ENCODE measurements at regions of chr1 and their contacts with region 1.

Region 1: DNA sequence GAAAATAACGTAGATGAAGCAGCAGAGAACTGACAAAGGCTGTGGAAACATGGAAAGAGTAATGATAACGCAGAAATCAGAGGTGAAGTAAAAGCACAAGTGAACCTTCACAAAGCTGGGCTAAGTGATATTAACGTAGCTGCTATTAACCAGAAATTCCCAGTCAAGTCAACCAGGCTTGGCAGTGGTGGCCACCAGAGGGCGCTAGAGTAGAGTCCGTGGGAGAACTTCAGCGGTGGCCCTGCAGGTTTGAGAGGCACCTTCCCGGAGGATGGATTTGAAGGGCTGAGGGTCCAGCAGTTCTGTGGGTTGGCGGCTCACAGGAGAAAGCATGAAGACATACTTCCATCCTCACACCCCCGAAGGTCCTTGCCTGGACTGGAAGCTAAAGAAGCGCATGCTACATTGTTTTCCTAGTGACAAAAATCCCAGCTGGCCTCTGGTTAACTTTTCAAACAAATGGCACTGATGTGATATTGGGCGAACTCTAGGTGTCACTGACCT is 81.7 kb upstream of the ZNF648 start:
- DNase-seq: peak; percentile 94 to 98 (median 96)
- H3K4me3 ChIP-seq: no peak overlapping the region
- H3K27ac ChIP-seq: peak overlapping the region; percentile 86 to 91
- H3K4me1 ChIP-seq: peaks cover 20% of the 10 kb centered on the region
- H3K27me3 ChIP-seq: no peaks in the 10 kb centered on the region
- CTCF ChIP-seq: peak; percentile 96 to 98 (median 96)
- EP300 ChIP-seq: no peak
- POLR2A ChIP-seq: peak; percentile 40

Region 2: GRCh38 chr1:181021811-181022434 is 1121.3 kb before region 1 on chr1:
- intact Hi-C with region 1: no loop called
- DNase-seq: peak; percentile 64 to 73 (median 72)
- H3K4me3 ChIP-seq: peak overlapping the region; percentile 87
- H3K27ac ChIP-seq: peak overlapping the region; percentile 43 to 76
- H3K4me1 ChIP-seq: no peaks in the 10 kb centered on the region
- H3K27me3 ChIP-seq: no peaks in the 10 kb centered on the region
- CTCF ChIP-seq: no peak
- EP300 ChIP-seq: no peak
- POLR2A ChIP-seq: no peak

Region 3: GRCh38 chr1:181989261-181989920 is 153.8 kb before region 1 on chr1:
- intact Hi-C with region 1: no loop called
- DNase-seq: no peak
- H3K4me3 ChIP-seq: no peak overlapping the region
- H3K27ac ChIP-seq: no peak overlapping the region
- H3K4me1 ChIP-seq: no peaks in the 10 kb centered on the region
- H3K27me3 ChIP-seq: no peaks in the 10 kb centered on the region
- CTCF ChIP-seq: no peak
- EP300 ChIP-seq: no peak
- POLR2A ChIP-seq: no peak

Region 4: GRCh38 chr1:182198049-182198501 is 54.9 kb after region 1 on chr1:
- intact Hi-C with region 1: loop called in 3 of 4 experiments (anchors 2 to 10 kb)
- DNase-seq: no peak
- H3K4me3 ChIP-seq: no peak overlapping the region
- H3K27ac ChIP-seq: peak overlapping the region; percentile 24 to 78
- H3K4me1 ChIP-seq: peaks cover 13% of the 10 kb centered on the region
- H3K27me3 ChIP-seq: no peaks in the 10 kb centered on the region
- CTCF ChIP-seq: peak in 1 of 3 donors; percentile 27
- EP300 ChIP-seq: no peak
- POLR2A ChIP-seq: no peak

Region 5: DNA sequence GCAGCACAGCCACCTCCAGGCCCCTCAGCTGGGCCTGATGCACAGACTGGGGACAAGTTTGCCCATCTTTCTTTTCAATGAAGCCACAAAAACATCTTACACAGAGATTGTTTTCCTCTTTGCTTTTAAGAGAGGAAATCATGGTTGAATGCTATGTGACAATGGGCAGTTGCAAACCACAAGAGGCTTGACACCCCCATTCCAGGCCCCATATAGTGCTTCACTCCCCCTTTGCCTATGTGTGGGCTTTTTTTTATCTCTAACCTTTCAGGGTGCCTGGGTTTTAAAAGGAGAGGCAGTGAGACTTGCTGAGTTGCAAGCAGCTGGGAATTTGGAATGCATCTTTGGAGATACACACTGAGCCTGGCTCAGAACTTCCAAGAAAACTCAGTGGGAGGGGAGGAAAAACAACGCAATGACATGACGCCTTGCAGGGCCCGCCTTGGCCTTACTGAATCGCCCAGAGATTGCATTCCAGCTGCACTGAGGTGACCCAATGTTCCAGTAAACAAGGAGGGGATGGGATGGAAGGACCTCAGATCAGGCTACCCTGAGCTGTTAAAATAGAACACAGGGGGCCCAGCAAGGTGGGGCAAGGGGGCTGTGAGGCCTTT is 63.5 kb after region 1 on chr1:
- intact Hi-C with region 1: loop called in 3 of 4 experiments (anchors 5 to 10 kb)
- DNase-seq: peak; percentile 79 to 92 (median 87)
- H3K4me3 ChIP-seq: no peak overlapping the region
- H3K27ac ChIP-seq: peak overlapping the region; percentile 47 to 86
- H3K4me1 ChIP-seq: peaks cover 19% of the 10 kb centered on the region
- H3K27me3 ChIP-seq: no peaks in the 10 kb centered on the region
- CTCF ChIP-seq: no peak
- EP300 ChIP-seq: peak; percentile 89
- POLR2A ChIP-seq: peak; percentile 31

Region 6: GRCh38 chr1:182301467-182302198 is 158.4 kb after region 1 on chr1:
- intact Hi-C with region 1: loop called in 1 of 4 experiments (anchors 10 kb)
- DNase-seq: peak in 2 of 5 donors; percentile 26 to 56
- H3K4me3 ChIP-seq: no peak overlapping the region
- H3K27ac ChIP-seq: peak overlapping the region in 1 of 2 donors; percentile 10
- H3K4me1 ChIP-seq: peaks cover 15% of the 10 kb centered on the region
- H3K27me3 ChIP-seq: no peaks in the 10 kb centered on the region
- CTCF ChIP-seq: no peak
- EP300 ChIP-seq: no peak
- POLR2A ChIP-seq: no peak

Region 7: DNA sequence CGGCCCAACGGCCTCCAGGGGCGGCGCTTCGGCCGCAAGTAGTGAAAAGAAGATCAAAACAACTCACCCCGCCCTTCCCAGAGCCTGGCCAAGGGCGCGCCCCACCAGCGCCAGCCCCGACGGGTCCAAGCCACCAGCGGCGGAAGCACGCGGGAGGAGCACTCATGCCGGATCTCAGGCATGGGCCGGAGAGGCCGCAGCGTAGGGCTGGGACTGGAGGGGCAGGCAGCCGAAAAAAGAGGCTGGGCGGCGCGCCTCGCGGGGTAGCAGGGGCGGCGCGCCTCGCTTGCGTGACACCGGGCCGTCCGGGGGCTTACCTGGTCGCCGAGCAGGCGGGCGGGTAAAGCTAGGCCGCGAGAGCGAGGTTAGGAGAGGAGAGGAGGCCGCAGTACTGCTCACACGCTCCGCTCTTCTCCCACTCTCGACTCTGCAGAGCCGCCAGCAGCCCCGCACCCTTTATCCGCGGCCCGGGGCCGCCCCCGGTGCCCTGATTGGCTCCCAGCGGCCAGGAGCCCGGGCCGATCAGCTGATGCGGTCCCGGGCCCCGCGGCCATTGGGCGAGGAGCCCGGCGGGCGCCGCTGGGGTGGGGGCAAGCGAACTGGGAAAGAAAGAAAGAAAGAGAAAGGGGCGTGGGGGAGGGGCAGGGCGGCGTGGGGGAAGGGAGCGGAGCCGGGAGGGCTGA is 248.3 kb after region 1 on chr1 and contains the start of gene GLUL:
- intact Hi-C with region 1: loop called (anchors 2 to 5 kb)
- DNase-seq: peak; percentile 97 to 98 (median 97)
- H3K4me3 ChIP-seq: peak within 1 kb of the TSS; percentile 88
- H3K27ac ChIP-seq: peak within 1 kb of the TSS; percentile 93 to 95
- H3K4me1 ChIP-seq: peaks cover 8% of the 10 kb centered on the region
- H3K27me3 ChIP-seq: no peaks in the 10 kb centered on the region
- CTCF ChIP-seq: peak; percentile 16 to 50 (median 26)
- EP300 ChIP-seq: no peak
- POLR2A ChIP-seq: peak; percentile 99
- total RNA-seq, gene GLUL: 605 to 1,338 (median 1,071) TPM

Region 8: GRCh38 chr1:182397771-182398393 is 254.7 kb after region 1 on chr1:
- intact Hi-C with region 1: loop called in 2 of 4 experiments (anchors 2 to 5 kb)
- DNase-seq: no peak
- H3K4me3 ChIP-seq: no peak overlapping the region
- H3K27ac ChIP-seq: peak overlapping the region in 1 of 2 donors; percentile 70
- H3K4me1 ChIP-seq: peaks cover 4% of the 10 kb centered on the region
- H3K27me3 ChIP-seq: no peaks in the 10 kb centered on the region
- CTCF ChIP-seq: no peak
- EP300 ChIP-seq: no peak
- POLR2A ChIP-seq: no peak

Measured in ovary (tissue), 10 donors.